Calu3 (cell line): ENCODE measurements at regions of chr4 and their contacts with region 1.

Region 1: DNA sequence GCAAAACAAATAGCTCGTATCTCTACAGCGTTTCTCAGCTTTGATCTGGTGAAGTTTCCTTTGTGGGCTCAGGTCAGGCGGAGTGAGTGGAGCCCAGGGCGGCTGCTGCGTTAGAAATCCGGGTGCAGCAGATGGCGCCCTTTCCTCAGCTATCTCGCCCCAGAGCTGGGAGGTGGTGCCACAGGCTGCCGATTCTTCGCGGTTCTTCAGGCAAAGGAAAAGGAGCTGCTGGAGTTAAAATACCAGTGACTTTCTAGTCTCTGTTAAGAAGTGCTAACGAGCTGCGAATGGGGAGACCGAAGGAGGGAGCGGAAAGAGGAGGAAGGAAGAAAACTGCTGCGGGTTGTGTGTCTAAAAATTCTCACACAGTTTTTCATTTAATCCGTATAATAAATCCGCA is 114.6 kb downstream of the CPE start:
- DNase-seq: peak; percentile 73
- H3K4me3 Mint-ChIP-seq: peak overlapping the region; percentile 58
- H3K27ac Mint-ChIP-seq: no peak overlapping the region
- H3K4me1 Mint-ChIP-seq: peaks cover 8% of the 10 kb centered on the region
- H3K27me3 Mint-ChIP-seq: no peaks in the 10 kb centered on the region
- CTCF ChIP-seq: peak; percentile 56

Region 2: DNA sequence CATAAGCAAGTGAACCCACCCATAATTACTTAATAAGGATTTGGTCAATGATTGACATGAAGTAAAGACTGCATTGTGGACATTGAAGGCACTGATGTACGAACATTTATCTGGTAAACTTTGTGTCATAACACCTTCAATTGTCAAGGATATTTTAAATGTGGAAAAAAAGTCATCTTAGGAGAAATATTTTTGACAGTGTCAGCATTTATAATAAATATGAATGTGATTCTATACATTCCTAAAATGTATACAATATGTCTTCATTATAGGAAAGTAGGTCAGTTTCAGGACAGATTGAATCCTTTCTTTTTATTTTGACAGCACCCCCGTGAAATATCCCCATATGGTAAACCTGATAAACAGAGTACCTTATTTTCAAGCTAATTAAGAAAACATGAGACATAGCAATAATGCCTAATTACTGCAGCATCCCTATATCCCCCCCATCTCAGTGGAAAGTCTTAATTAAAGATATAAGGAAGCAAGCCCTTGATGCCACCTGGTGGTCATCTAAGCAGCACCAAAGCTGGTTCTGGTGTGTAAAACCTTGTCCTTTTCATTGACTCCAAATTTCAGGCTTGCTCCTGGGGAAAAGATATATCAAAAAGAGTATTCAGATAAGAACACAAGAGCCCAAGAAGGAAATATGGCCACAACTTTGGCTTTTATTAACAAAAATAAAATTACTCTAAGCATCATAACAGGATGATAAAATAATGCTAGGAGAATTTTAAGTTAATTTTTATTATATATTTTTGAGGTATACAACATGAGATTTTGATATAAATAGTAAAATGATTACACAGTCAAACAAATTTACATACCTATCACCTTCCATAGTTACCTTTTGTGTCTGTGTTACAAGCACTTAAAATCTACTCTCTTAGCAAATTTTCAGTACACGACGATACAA is 759.4 kb after region 1 on chr4:
- CTCF ChIA-PET with region 1: no interaction called
- intact Hi-C with region 1: loop called (anchors 10 kb)
- DNase-seq: peak; percentile 17
- H3K4me3 Mint-ChIP-seq: no peak overlapping the region
- H3K27ac Mint-ChIP-seq: no peak overlapping the region
- H3K4me1 Mint-ChIP-seq: no peaks in the 10 kb centered on the region
- H3K27me3 Mint-ChIP-seq: no peaks in the 10 kb centered on the region
- CTCF ChIP-seq: peak; percentile 41